ENCODE measurements at regions of chr3 and their contacts with region 1.

Region 1: GRCh38 chr3:48439820-48440589 is at the starts of genes CCDC51 and TMA7:
- DNase-seq: peak; percentile 99
- ATAC-seq: peak; percentile 98
- H3K4me3 ChIP-seq: peak within 1 kb of the TSS; percentile 49
- H3K27ac ChIP-seq: peak within 1 kb of the TSS; percentile 89
- H3K4me1 ChIP-seq: no peaks in the 10 kb centered on the region
- H3K27me3 ChIP-seq: no peaks in the 10 kb centered on the region
- total RNA-seq, gene CCDC51: 8.7 to 11.5 (median 11.1) TPM
- total RNA-seq, gene TMA7: 187 to 270 (median 216) TPM

Region 2: GRCh38 chr3:48400824-48401433 is 39.1 kb before region 1 on chr3:
- intact Hi-C with region 1: loop called (anchors 1 to 5 kb)
- DNase-seq: peak in 2 of 3 donors; percentile 55 to 68
- ATAC-seq: peak; percentile 49 to 54
- H3K4me3 ChIP-seq: no peak overlapping the region
- H3K27ac ChIP-seq: no peak overlapping the region
- H3K4me1 ChIP-seq: no peaks in the 10 kb centered on the region
- H3K27me3 ChIP-seq: no peaks in the 10 kb centered on the region